Heart left ventricle (tissue), 16 donors: ENCODE measurements at regions of chr7 and their contacts with region 1.

Region 1: GRCh38 chr7:78052112-78052511 is 253.5 kb downstream of the PHTF2 start:
- DNase-seq: no peak
- ATAC-seq: no peak
- H3K4me3 ChIP-seq: no peak overlapping the region
- H3K27ac ChIP-seq: no peak overlapping the region
- H3K4me1 ChIP-seq: no peaks in the 10 kb centered on the region
- H3K27me3 ChIP-seq: no peaks in the 10 kb centered on the region
- CTCF ChIP-seq: no peak
- POLR2A ChIP-seq: no peak

Region 2: GRCh38 chr7:77923419-77923818 is 128.7 kb before region 1 on chr7:
- intact Hi-C with region 1: no loop called
- DNase-seq: no peak
- ATAC-seq: peak; percentile 49 to 64 (median 58)
- H3K4me3 ChIP-seq: no peak overlapping the region
- H3K27ac ChIP-seq: no peak overlapping the region
- H3K4me1 ChIP-seq: peaks cover 0 to 2% (median 0%) of the 10 kb centered on the region in 12 donors
- H3K27me3 ChIP-seq: no peaks in the 10 kb centered on the region
- CTCF ChIP-seq: no peak
- POLR2A ChIP-seq: no peak

Region 3: DNA sequence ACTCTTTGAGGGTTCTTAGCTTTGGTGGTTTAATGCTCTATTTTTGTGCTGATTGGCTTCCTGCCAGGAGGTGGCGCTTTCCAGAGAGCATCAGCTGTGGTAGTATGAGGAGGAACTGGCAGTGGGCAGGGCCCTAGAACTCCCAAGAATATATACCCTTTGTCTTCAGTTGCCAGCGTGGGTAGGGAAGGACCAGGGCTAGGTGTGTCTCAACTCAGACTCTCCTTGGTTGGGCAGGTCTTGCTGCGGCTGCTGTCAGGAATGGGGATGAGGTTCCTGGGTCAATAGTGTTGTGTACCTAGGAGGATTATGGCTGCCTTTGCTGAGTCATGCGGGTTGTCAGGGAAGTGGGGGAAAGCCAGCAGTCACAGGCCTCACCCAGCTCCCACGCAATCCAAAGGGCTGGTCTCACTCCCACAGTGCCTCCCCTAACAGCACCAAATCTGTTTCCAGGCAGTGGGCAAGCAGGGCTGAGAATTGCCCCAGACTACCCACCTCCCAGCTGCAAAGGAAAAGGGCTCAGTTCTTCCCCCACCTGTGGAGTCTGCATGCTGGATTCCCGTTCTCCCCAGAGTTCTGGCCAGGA is 62.0 kb before region 1 on chr7:
- intact Hi-C with region 1: loop called in 1 of 10 experiments (anchors 10 kb)
- DNase-seq: no peak
- ATAC-seq: no peak
- H3K4me3 ChIP-seq: no peak overlapping the region
- H3K27ac ChIP-seq: no peak overlapping the region
- H3K4me1 ChIP-seq: peaks cover 0 to 8% (median 1%) of the 10 kb centered on the region in 12 donors
- H3K27me3 ChIP-seq: no peaks in the 10 kb centered on the region
- CTCF ChIP-seq: no peak
- POLR2A ChIP-seq: no peak

Region 4: DNA sequence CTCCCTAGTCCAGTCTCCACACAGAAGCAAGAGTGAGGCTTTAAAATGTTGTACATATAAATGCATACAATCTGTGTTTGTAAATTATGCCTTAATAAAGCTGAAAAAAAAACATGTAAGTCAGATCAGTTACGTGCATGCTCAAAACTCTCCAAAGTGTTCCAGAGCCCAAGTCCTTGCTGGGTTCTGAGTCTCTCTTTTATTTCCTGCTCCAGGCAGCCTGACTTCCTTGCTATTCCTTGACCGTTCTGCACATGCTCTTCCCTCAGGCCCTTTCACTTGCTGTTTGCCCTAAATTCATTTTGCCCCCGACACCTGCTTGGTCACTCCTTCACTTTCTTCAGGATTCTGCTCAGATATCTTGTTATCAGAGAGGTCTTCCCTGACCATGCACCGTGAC is 516.6 kb after region 1 on chr7:
- intact Hi-C with region 1: no loop called
- DNase-seq: no peak
- ATAC-seq: no peak
- H3K4me3 ChIP-seq: no peak overlapping the region
- H3K27ac ChIP-seq: no peak overlapping the region
- H3K4me1 ChIP-seq: no peaks in the 10 kb centered on the region
- H3K27me3 ChIP-seq: no peaks in the 10 kb centered on the region
- CTCF ChIP-seq: no peak
- POLR2A ChIP-seq: no peak